IMR-90 (cell line): ENCODE measurements at regions of chr6 and their contacts with region 1.

Region 1: DNA sequence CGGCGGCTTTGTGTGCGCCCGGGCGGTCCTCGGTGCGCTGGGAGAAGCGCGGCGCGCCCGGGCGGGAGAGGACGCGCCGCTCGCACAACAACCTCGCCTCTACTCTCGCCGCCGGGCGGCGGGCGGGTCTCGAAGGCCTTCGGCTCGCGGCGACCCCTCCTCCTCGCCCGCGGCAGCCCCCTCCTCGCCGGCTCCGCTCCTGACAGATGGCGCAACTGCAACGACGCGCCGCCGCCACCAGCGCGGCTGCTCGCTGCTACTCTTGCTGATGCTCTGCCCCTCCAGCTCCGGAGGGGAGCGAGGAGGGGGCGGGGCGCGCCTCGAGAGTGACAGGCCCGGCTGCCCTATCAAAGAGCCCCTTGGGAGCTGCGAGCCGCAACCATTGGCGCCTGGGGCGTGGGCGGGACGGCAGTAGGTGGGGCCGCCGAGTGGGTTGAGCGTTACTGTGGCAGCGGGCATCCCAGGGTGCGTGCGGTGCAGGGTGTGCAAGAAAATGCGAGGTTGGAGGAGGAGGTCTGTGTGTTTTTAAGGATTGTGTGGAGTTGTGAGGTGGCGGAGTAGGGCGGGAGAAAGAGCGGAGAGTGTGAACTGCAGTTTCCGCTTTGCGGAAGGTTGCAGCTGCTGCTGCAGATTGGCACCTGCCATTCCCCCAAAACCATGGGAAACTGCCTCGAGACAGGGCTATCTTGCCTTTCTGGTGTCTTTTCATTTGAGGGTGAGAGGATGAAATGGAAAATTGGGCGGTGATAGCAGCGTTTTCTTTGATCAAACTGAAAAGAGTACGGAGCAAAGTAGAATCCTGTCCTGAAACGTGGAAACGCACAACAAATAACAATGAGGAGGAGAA is at the start of gene FYN:
- DNase-seq: peak; percentile 92
- ATAC-seq: peak; percentile 99
- H3K4me3 ChIP-seq: peak within 1 kb of the TSS; percentile 59
- H3K27ac ChIP-seq: peak within 1 kb of the TSS; percentile 64
- H3K4me1 ChIP-seq: peaks cover 1% of the 10 kb centered on the region; the same call in 1 of the 2 replicates
- H3K27me3 ChIP-seq: 0 out of 2 replicates have a peak, but pooled peaks cover 2% of the 10 kb centered on the region
- CTCF ChIP-seq: peak; percentile 33
- POLR2A ChIP-seq: peak; percentile 81
- RAD21 ChIP-seq: peak; percentile 54
- total RNA-seq, gene FYN: 36.4 and 41.1 TPM in 2 replicates

Region 2: GRCh38 chr6:111709615-111710398 is 163.6 kb before region 1 on chr6:
- CTCF ChIA-PET with region 1: no interaction called
- POLR2A ChIA-PET with region 1: no interaction called
- dilution Hi-C with region 1: no loop called
- in situ Hi-C with region 1: no loop called
- intact Hi-C with region 1: loop called (anchors 2 kb)
- DNase-seq: peak; percentile 76
- ATAC-seq: peak; percentile 90
- H3K4me3 ChIP-seq: no peak overlapping the region
- H3K27ac ChIP-seq: 0 out of 2 replicates have a peak overlapping the region, but pooled peaks have one; percentile 48
- H3K4me1 ChIP-seq: peaks cover 6% of the 10 kb centered on the region
- H3K27me3 ChIP-seq: no peaks in the 10 kb centered on the region
- CTCF ChIP-seq: peak; percentile 82
- POLR2A ChIP-seq: no peak
- RAD21 ChIP-seq: peak; percentile 87

Region 3: DNA sequence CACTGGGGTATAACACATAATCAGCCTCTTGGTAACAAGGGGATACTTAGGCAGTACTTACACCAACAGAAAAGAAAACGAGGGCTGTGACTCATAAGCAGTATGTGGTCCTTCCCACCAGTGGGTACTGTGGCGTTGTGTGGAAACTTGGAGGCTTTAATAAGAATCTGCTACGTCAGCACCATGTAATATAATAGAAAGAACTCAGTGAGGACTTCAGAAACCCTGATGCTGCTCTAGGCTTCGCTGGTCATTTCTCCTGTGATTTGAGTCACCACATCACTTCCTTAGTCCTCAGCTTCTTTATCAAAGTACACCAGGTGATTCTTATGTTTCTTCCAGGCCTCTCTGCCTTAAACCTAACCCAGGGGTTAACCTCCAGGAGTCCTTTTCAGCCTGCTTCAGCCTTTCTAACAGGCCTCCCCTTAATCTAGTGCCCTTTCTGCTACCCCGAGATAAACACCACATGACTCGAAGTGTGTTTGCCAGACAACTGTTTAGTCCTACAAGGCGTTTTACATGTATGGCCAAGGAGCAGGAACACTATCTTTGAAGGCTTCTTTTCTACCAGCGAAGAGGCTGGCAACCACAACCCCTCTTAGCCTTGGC is 68.7 kb before region 1 on chr6:
- CTCF ChIA-PET with region 1: no interaction called
- POLR2A ChIA-PET with region 1: no interaction called
- dilution Hi-C with region 1: no loop called
- in situ Hi-C with region 1: no loop called
- intact Hi-C with region 1: loop called (anchors 5 kb)
- DNase-seq: peak; percentile 74
- ATAC-seq: no peak
- H3K4me3 ChIP-seq: no peak overlapping the region
- H3K27ac ChIP-seq: no peak overlapping the region
- H3K4me1 ChIP-seq: peaks cover 33% of the 10 kb centered on the region
- H3K27me3 ChIP-seq: no peaks in the 10 kb centered on the region
- CTCF ChIP-seq: peak; percentile 37
- POLR2A ChIP-seq: no peak
- RAD21 ChIP-seq: peak; percentile 45

Region 4: GRCh38 chr6:111918825-111919224 is 45.4 kb after region 1 on chr6:
- CTCF ChIA-PET with region 1: no interaction called
- POLR2A ChIA-PET with region 1: no interaction called
- dilution Hi-C with region 1: no loop called
- in situ Hi-C with region 1: no loop called
- intact Hi-C with region 1: no loop called
- DNase-seq: peak; percentile 79
- ATAC-seq: peak; percentile 24; the same call in 1 of the 2 replicates
- H3K4me3 ChIP-seq: no peak overlapping the region
- H3K27ac ChIP-seq: no peak overlapping the region
- H3K4me1 ChIP-seq: no peaks in the 10 kb centered on the region
- H3K27me3 ChIP-seq: no peaks in the 10 kb centered on the region
- CTCF ChIP-seq: no peak
- POLR2A ChIP-seq: no peak
- RAD21 ChIP-seq: no peak

Region 5: DNA sequence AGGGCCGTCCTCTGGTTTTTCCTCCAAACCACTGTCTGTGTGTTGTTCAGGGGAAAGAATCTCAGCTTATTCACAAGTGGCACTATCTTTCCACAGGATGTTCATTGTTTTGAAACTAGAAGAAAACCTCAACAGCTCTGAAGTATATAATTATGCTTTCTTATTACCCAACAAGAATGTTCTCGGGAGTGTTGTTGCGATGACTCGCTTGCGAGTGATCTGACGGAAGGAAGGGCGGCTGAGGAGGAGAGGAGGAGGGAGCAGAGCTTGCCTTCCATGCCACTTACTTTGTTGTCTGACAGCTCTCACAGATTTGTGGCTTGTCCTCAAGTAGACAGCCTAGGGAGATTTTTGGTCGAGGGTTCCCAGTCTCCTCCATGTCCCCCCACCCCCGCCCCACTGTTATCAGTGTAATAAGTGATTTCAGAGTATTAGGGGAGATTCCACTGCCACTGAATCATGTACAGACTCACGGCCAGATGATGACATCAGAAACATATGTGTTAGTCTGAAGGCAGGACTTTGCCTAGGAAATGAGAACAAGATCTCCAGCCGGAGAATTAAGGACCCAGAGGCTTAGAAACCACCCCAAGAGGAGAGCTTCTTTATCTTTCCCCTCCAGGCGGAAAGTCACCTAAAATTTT is 99.8 kb after region 1 on chr6:
- CTCF ChIA-PET with region 1: no interaction called
- POLR2A ChIA-PET with region 1: no interaction called
- dilution Hi-C with region 1: no loop called
- in situ Hi-C with region 1: no loop called
- intact Hi-C with region 1: loop called (anchors 5 kb)
- DNase-seq: peak; percentile 98
- ATAC-seq: peak; percentile 93
- H3K4me3 ChIP-seq: peak overlapping the region; percentile 13
- H3K27ac ChIP-seq: peak overlapping the region; percentile 87
- H3K4me1 ChIP-seq: peaks cover 9% of the 10 kb centered on the region
- H3K27me3 ChIP-seq: no peaks in the 10 kb centered on the region
- CTCF ChIP-seq: no peak
- POLR2A ChIP-seq: peak; percentile 69
- RAD21 ChIP-seq: peak; percentile 6; the same call in 1 of the 2 replicates

Region 6: DNA sequence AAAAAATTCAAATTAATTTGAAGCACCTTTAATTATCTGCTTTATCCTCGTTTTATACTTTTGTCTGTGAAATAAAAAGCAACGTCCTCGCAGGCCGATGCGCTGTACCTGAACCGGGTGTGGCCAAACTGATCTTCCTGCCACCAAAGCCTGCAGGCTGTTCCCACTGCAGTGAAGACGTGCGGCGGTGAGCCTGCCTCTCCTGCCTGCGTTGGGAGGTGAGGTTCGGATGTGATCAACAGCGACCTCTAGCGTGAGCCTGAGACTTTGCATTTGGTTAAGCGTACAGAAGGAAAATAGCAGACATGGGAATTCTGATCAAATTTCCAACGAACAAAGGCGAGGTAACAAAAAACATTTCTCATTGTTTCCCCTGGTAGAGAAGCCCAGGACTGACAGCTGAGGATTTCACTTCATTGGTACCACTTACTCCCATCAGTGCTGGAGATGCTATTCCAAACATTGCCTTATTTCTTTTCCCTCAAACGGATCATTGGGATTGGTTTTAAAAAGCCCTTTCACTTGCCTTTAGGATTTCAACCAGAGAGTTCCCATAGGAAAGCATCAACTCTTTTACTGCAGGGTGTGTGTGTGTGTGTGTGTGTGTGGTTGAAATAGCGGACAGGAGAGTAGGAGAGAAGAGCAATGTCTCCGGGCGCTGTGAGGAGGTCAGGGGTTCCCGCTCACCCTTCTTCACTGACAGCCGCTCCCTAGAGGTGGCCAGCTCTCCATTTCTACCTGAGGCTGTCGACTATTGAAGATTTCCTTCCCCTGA is 123.9 kb after region 1 on chr6:
- CTCF ChIA-PET with region 1: no interaction called
- POLR2A ChIA-PET with region 1: no interaction called
- dilution Hi-C with region 1: no loop called
- in situ Hi-C with region 1: no loop called
- intact Hi-C with region 1: loop called (anchors 1 kb)
- DNase-seq: peak; percentile 80
- ATAC-seq: peak; percentile 96
- H3K4me3 ChIP-seq: no peak overlapping the region
- H3K27ac ChIP-seq: no peak overlapping the region
- H3K4me1 ChIP-seq: no peaks in the 10 kb centered on the region
- H3K27me3 ChIP-seq: peaks cover 2% of the 10 kb centered on the region; the same call in 1 of the 2 replicates
- CTCF ChIP-seq: peak; percentile 95
- POLR2A ChIP-seq: 0 out of 2 replicates have a peak, but pooled peaks have one; percentile 53
- RAD21 ChIP-seq: peak; percentile 98

Region 7: DNA sequence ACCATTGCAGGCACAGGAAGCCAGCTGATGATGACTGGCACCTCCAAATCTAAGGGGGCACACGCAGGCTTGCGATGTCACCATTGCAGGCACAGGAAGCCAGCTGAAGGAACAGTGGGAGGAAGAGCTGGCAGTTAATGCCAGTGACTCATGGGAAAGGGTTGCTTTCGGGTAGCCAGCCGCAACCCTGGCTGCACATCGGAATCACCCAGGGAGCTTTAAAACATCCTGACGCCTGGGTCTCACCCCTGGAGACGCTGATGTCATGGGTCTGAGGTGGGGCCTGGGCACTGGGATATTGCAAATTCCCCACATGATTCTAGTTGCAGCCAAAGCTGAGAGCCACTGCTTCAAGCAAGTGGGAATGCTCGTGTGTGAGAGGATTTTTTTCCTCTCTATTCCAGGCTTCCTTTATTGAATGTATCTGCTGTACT is 164.4 kb after region 1 on chr6:
- CTCF ChIA-PET with region 1: no interaction called
- POLR2A ChIA-PET with region 1: no interaction called
- dilution Hi-C with region 1: no loop called
- in situ Hi-C with region 1: no loop called
- intact Hi-C with region 1: no loop called
- DNase-seq: peak; percentile 90
- ATAC-seq: peak; percentile 96
- H3K4me3 ChIP-seq: no peak overlapping the region
- H3K27ac ChIP-seq: no peak overlapping the region
- H3K4me1 ChIP-seq: peaks cover 6% of the 10 kb centered on the region
- H3K27me3 ChIP-seq: peaks cover 2% of the 10 kb centered on the region; the same call in 1 of the 2 replicates
- CTCF ChIP-seq: no peak
- POLR2A ChIP-seq: no peak; the same call in 1 of the 2 replicates
- RAD21 ChIP-seq: no peak